Tibial artery (tissue), 4 donors: ENCODE measurements at regions of chr1 and their contacts with region 1.

Region 1: GRCh38 chr1:38138498-38139233 is 92.1 kb upstream of the POU3F1 start:
- DNase-seq: peak; percentile 82 to 85
- H3K4me3 ChIP-seq: peak overlapping the region in 1 of 2 donors; percentile 10
- H3K27ac ChIP-seq: peak overlapping the region; percentile 61 to 69
- H3K4me1 ChIP-seq: peaks cover 0 to 41% (median 27%) of the 10 kb centered on the region in 4 donors
- H3K27me3 ChIP-seq: peaks cover 0 to 11% of the 10 kb centered on the region in 2 donors
- CTCF ChIP-seq: peak; percentile 61 to 65

Region 2: GRCh38 chr1:38005195-38006007 is 133.3 kb before region 1 on chr1 and contains the start of gene FHL3:
- intact Hi-C with region 1: no loop called
- DNase-seq: peak; percentile 45 to 85
- H3K4me3 ChIP-seq: peak within 1 kb of the TSS; percentile 76 to 91
- H3K27ac ChIP-seq: peak within 1 kb of the TSS; percentile 93 to 98
- H3K4me1 ChIP-seq: peaks cover 4 to 68% (median 50%) of the 10 kb centered on the region in 4 donors
- H3K27me3 ChIP-seq: no peaks in the 10 kb centered on the region
- CTCF ChIP-seq: no peak

Region 3: DNA sequence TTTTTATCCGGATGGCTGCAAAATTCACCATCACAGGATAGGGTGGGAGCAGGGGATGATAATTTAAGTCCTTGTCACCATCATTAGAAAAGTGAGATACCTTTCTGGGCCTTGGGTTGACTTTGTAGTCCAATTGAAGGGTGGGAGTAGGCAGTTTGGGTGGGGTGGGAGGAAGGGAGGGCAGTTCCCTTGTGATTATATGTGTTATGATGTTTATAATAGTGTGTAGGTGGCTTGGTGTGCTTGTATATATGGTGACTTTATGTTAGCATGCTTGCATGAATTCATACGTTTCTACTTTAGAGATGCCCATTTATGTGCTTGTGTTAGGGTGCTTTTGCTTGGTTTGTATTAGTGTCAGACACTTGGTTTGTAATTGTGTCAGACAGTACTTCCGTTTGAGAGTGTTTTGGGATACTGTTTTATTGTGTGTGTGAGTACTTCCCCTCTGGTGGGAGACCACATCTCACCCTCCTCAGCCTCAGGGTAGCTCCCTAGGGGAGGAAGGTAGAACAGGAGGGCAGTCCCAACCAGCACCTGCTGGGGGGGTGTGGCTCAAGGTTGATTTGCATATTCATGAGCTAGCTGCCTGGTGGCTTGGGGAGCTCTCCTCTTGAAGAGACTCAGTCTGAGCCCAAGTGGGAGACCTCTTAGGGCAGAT is 85.8 kb before region 1 on chr1:
- intact Hi-C with region 1: loop called (anchors 10 kb)
- DNase-seq: no peak
- H3K4me3 ChIP-seq: no peak overlapping the region
- H3K27ac ChIP-seq: no peak overlapping the region
- H3K4me1 ChIP-seq: peaks cover 0 to 5% (median 2%) of the 10 kb centered on the region in 4 donors
- H3K27me3 ChIP-seq: peaks cover 0 to 13% of the 10 kb centered on the region in 2 donors
- CTCF ChIP-seq: no peak